ENCODE measurements at regions of chr1 and their contacts with region 1.

Region 1: GRCh38 chr1:213015099-213016050 is at the start of gene ANGEL2:
- DNase-seq: peak; percentile 95
- H3K4me3 Mint-ChIP-seq: peak within 1 kb of the TSS; percentile 99
- H3K27ac Mint-ChIP-seq: peak within 1 kb of the TSS; percentile 100
- H3K4me1 Mint-ChIP-seq: peaks cover 27% of the 10 kb centered on the region
- H3K27me3 Mint-ChIP-seq: peaks cover 6% of the 10 kb centered on the region
- total RNA-seq, gene ANGEL2: 46.2 and 46.3 TPM in 2 replicates

Region 2: DNA sequence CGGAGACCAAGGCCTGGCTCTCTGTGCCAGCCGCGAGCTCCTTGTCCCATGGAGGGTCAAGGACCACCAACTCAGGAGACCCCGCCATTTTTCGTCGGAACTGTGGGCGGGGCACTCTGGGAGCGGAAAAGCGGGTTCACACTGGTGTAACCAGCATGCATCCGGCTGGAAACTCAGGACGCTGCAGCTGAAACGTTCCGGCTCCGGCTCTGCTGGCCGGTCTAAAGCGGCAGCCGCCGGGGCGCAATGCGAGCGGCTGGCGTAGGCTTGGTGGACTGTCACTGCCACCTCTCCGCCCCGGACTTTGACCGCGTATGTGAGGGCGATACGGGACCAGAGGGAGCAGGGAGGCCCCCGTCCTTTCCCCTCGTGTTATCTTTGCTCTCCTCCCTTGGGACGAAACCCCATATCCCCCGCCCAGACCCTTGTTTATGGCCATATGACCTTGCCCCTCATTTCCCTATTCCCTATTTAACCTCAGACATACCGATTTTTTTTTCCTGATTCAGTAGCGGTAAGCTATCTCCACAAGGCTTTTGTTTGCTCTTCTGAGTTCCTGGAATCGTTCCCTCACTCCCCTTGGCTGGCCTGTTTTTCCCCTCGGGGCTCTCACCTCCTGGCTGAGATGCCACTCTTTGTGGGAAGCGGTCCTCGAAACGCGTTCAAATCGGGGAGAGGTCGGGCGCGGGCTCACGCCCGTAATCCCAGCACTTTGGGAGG is 223.5 kb before region 1 on chr1 and contains the starts of genes NSL1 and TATDN3:
- intact Hi-C with region 1: loop called (anchors 1 kb)
- DNase-seq: peak; percentile 94
- H3K4me3 Mint-ChIP-seq: peak within 1 kb of the TSS; percentile 100
- H3K27ac Mint-ChIP-seq: peak within 1 kb of the TSS; percentile 98
- H3K4me1 Mint-ChIP-seq: peaks cover 25% of the 10 kb centered on the region
- H3K27me3 Mint-ChIP-seq: no peaks in the 10 kb centered on the region
- total RNA-seq, gene NSL1: 45.4 and 52.6 TPM in 2 replicates
- total RNA-seq, gene TATDN3: 16.7 and 18.7 TPM in 2 replicates

Region 3: GRCh38 chr1:212857992-212858460 is 157.3 kb before region 1 on chr1 and contains the start of gene FLVCR1:
- intact Hi-C with region 1: loop called (anchors 5 kb)
- DNase-seq: peak; percentile 95
- H3K4me3 Mint-ChIP-seq: no peak within 1 kb of the TSS
- H3K27ac Mint-ChIP-seq: peak within 1 kb of the TSS; percentile 97
- H3K4me1 Mint-ChIP-seq: peaks cover 20% of the 10 kb centered on the region
- H3K27me3 Mint-ChIP-seq: no peaks in the 10 kb centered on the region
- total RNA-seq, gene FLVCR1: 23.0 and 24.3 TPM in 2 replicates

Region 4: DNA sequence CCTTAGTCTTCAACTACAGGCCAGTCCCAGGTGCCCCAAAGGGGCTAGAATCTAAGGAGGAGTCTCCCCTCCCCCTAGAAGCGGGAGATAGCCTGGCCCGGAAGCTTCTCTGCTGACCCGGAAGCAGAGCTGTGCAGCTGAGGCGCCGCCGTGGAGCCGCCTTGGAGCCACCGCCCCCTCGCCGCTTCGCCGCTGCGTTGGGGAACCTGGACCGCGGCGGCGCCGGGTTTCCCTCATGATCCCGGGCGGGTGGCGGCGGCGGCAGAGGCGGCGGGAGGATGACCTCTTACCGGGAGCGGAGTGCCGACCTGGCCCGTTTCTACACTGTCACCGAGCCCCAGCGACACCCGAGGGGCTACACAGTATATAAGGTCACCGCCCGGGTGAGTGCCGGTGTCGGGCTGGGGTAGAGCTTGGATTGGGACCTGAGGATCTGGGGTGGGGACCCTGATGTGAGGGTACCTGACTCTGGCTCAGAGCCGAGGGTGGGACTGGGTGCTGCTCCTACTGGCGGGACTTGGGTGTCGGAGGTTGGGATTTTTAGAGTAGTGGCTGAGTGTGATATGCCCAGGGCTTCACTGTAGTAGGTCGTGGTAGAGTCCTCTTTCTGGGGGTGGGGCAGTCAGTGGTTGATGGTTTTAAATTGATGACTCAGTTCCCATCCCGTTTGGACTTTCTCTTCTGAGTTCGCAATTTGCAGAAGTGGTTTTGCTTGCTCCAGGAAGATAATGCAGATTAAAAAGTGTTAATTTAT is 35.9 kb after region 1 on chr1 and contains the start of gene RPS6KC1:
- intact Hi-C with region 1: loop called (anchors 1 kb)
- DNase-seq: peak; percentile 72
- H3K4me3 Mint-ChIP-seq: peak within 1 kb of the TSS; percentile 93
- H3K27ac Mint-ChIP-seq: peak within 1 kb of the TSS; percentile 89
- H3K4me1 Mint-ChIP-seq: peaks cover 31% of the 10 kb centered on the region
- H3K27me3 Mint-ChIP-seq: peaks cover 12% of the 10 kb centered on the region
- total RNA-seq, gene RPS6KC1: 7.2 and 7.3 TPM in 2 replicates

Region 5: GRCh38 chr1:213070406-213070805 is 55.0 kb after region 1 on chr1:
- intact Hi-C with region 1: loop called (anchors 5 kb)
- DNase-seq: no peak
- H3K4me3 Mint-ChIP-seq: no peak overlapping the region
- H3K27ac Mint-ChIP-seq: no peak overlapping the region
- H3K4me1 Mint-ChIP-seq: peaks cover 19% of the 10 kb centered on the region
- H3K27me3 Mint-ChIP-seq: no peaks in the 10 kb centered on the region

Measured in activated T-helper 2 cell treated with anti-CD3 and anti-CD28 coated beads, Interferon-gamma antibody, Interleukin-2, Interleukin-4, amounts not matched to agents 10 μg/mL and 5 μg/mL and 100 μg/mL, durations not matched to agents 14 hours and 24 hours and 36 hours (primary cell).